ENCODE measurements at regions of chr12 and their contacts with region 1.

Region 1: GRCh38 chr12:1594261-1595025 is at the start of gene FBXL14:
- DNase-seq: peak; percentile 85
- CTCF ChIP-seq: peak; percentile 7

Region 2: GRCh38 chr12:920676-921075 is 673.8 kb before region 1 on chr12:
- CTCF ChIA-PET with region 1: no interaction called
- POLR2A ChIA-PET with region 1: no interaction called
- DNase-seq: no peak
- CTCF ChIP-seq: no peak

Region 3: GRCh38 chr12:1488908-1489381 is 105.5 kb before region 1 on chr12:
- CTCF ChIA-PET with region 1: no interaction called
- POLR2A ChIA-PET with region 1: no interaction called
- DNase-seq: no peak
- CTCF ChIP-seq: no peak

Region 4: DNA sequence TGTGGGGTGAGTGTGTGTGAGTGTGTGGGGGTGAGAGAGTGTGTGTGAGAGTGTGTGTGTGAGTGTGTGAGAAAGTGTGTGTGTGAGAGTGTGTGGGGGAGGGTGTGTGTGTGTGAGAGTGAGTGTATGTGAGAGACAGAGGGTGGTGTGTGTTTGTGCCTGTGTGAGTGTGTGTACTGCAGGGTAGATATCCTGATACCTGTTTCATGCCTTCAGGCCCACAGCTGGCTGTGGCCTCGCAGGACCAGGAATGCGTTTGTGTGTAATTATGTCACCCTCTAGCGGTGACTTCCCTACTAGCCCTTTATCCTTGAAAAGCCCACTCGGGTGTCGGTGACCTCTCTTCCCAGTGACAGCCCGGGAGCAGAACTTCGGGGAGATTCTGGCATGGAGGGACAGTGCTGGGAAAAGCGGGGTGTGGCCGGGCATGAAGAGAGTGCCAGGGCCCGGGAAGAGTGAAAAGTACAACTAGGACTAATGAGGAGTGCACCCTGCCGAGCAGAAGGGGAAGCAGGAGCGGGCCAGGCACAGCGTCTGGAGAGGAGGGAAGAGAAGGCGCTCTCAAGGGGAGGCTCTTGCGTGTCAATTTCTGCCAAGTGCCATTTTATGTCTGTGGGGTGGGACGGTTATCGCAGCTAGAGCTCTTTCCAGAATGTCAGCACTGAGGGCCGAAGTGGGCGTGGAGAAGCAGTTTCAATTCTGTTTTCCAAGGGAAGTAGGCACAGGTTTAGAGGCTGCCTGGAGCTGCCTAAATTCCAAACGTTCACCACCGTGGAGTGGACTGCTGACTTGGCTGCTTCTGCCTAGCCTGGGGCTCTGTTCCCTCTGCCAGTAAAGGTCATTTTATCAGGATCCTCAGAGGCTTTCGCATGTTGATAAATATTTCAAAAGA is 10.9 kb after region 1 on chr12:
- CTCF ChIA-PET with region 1: interaction called, 15 read pairs
- POLR2A ChIA-PET with region 1: interaction called, 6 read pairs
- DNase-seq: peak; percentile 63
- CTCF ChIP-seq: peak; percentile 65

Measured in GM10248 (cell line).